ENCODE measurements at regions of chr2 and their contacts with region 1.

Region 1: GRCh38 chr2:232539298-232540231 is at the start of gene CHRNG:
- DNase-seq: no peak
- H3K4me3 ChIP-seq: no peak within 1 kb of the TSS
- H3K27ac ChIP-seq: no peak within 1 kb of the TSS
- H3K4me1 ChIP-seq: peaks cover 5% of the 10 kb centered on the region
- H3K27me3 ChIP-seq: no peaks in the 10 kb centered on the region
- CTCF ChIP-seq: no peak
- total RNA-seq, gene CHRNG: not detected

Region 2: GRCh38 chr2:232088771-232089170 is 450.8 kb before region 1 on chr2:
- CTCF ChIA-PET with region 1: no interaction called
- dilution Hi-C with region 1: no loop called
- in situ Hi-C with region 1: no loop called
- intact Hi-C with region 1: no loop called
- DNase-seq: no peak
- H3K4me3 ChIP-seq: no peak overlapping the region
- H3K27ac ChIP-seq: no peak overlapping the region
- H3K4me1 ChIP-seq: no peaks in the 10 kb centered on the region
- H3K27me3 ChIP-seq: no peaks in the 10 kb centered on the region
- CTCF ChIP-seq: no peak

Region 3: GRCh38 chr2:232490224-232491138 is 49.1 kb before region 1 on chr2:
- CTCF ChIA-PET with region 1: no interaction called
- dilution Hi-C with region 1: no loop called
- in situ Hi-C with region 1: no loop called
- intact Hi-C with region 1: no loop called
- DNase-seq: no peak
- H3K4me3 ChIP-seq: no peak overlapping the region
- H3K27ac ChIP-seq: no peak overlapping the region
- H3K4me1 ChIP-seq: no peaks in the 10 kb centered on the region
- H3K27me3 ChIP-seq: peaks cover 26% of the 10 kb centered on the region
- CTCF ChIP-seq: no peak

Region 4: DNA sequence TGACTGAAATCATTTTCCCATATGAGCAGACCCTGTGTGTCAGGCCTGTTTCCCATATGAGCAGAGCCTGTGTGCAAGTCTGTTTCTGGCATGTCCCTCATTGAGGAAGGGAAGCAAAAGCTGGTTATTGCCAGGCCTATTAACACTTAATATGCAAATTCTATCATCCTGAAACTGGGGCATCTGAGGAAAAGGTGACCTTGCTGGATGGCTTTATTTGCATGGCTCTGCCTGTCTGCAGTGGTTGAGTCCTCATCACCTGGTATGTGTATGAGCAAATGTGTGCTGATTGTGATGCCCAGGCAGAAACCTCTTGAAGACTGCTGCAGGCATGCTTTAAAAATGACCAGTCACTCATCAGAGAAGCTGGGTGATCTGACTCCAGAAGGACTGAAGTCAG is 42.2 kb after region 1 on chr2:
- CTCF ChIA-PET with region 1: no interaction called
- dilution Hi-C with region 1: loop called (anchors 5 kb)
- in situ Hi-C with region 1: no loop called
- intact Hi-C with region 1: no loop called
- DNase-seq: no peak
- H3K4me3 ChIP-seq: no peak overlapping the region
- H3K27ac ChIP-seq: no peak overlapping the region
- H3K4me1 ChIP-seq: peaks cover 6% of the 10 kb centered on the region
- H3K27me3 ChIP-seq: no peaks in the 10 kb centered on the region
- CTCF ChIP-seq: no peak

Measured in mammary epithelial cell (primary cell).